ENCODE measurements at regions of chr22 and their contacts with region 1.

Region 1: DNA sequence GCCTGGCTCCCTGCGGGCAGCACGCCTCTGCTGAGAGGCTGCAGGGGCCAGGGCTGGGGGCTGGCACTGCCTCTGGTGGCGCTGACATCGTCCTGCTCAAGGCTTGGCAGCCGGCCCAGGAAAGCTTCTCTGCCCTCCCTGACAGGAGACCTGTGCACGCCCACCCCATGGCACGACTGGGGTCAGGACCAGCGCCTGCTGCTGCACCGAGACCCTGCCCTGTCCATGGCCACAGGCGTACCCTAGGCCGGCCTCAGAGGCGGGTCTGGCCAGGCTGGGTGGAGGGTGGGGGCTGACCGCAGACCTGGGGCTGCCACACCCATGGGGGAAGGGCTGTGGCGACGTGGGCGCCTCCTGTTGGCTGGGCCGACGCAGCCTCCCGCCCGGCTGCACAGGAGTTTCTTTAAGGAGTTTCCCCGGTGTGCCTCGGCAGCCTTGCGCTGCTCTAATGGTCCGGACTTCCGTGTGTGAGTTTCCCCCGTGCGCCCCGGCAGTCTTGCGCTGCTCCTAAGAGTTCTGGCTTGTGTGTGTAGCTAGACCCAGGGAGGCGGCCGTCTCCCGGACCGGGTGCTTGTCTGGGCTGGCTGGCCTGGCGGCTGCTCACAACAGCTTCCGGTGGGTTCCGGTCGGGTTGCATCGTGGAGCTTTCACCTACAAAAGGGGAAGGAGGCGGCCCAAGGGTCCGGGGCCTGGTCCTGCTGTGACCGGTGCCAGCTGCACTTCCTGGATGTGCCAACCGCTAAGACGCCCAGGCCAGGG is 4.6 kb downstream of the TRABD start:
- DNase-seq: peak; percentile 88
- ATAC-seq: peak; percentile 57
- H3K4me3 Mint-ChIP-seq: peak overlapping the region; percentile 88
- H3K27ac Mint-ChIP-seq: peak overlapping the region; percentile 95
- H3K4me1 Mint-ChIP-seq: peaks cover 52% of the 10 kb centered on the region
- H3K27me3 Mint-ChIP-seq: no peaks in the 10 kb centered on the region

Region 2: DNA sequence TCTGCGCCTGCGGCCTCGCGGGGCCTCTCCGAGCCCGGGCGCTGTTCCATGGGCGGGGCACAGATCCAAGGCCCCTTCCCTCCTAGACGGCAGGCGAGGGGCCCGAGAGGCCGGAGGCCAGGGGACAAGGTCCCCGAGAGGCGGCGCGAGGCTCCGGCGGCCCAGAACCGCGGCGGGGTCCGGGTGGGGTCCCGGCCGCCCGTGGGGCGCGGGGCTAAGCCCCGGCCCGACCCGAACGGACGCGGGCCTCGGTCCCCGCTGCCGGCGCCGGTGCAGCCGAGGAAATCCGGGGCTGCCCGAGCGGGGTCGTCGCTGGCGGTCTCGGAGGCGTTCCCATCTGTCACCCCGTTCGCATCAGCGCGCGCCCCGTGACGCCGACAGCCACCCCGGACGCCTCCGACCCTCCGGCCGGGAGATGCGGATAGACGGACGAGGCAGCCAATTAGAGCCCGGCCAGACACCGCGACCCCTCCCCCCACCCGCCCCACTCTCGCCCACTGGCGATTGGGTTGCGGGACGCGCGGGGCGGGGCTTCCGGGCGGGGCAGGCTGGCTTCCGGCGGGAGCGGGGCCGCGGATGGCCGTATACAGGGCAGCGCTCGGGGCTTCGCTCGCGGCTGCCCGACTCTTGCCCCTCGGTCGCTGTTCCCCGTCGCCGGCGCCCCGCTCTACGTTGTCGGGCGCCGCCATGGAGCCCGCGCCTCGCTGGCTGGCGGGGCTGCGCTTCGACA is 10.3 kb after region 1 on chr22 and contains the start of gene SELENOO:
- CTCF ChIA-PET with region 1: interaction called, 15 read pairs
- DNase-seq: peak; percentile 93
- ATAC-seq: peak; percentile 91
- H3K4me3 Mint-ChIP-seq: peak within 1 kb of the TSS; percentile 80
- H3K27ac Mint-ChIP-seq: peak within 1 kb of the TSS; percentile 55
- H3K4me1 Mint-ChIP-seq: peaks cover 28% of the 10 kb centered on the region
- H3K27me3 Mint-ChIP-seq: no peaks in the 10 kb centered on the region
- total RNA-seq, gene SELENOO: 30.0 to 35.6 TPM

Region 3: GRCh38 chr22:50209893-50210292 is 19.5 kb after region 1 on chr22:
- CTCF ChIA-PET with region 1: interaction called, 10 read pairs
- DNase-seq: peak; percentile 81
- ATAC-seq: peak; percentile 77
- H3K4me3 Mint-ChIP-seq: no peak overlapping the region
- H3K27ac Mint-ChIP-seq: peak overlapping the region; percentile 71
- H3K4me1 Mint-ChIP-seq: peaks cover 13% of the 10 kb centered on the region
- H3K27me3 Mint-ChIP-seq: no peaks in the 10 kb centered on the region

Measured in activated CD8-positive, alpha-beta memory T cell treated with anti-CD3 and anti-CD28 coated beads, Interleukin-2, amount 10 ng/mL, durations not matched to agents 7 days and 5 days (primary cell).